IMR-90 (cell line): ENCODE measurements at regions of chr6 and their contacts with region 1.

Region 1: GRCh38 chr6:5379647-5380242 is 118.4 kb downstream of the FARS2 start:
- DNase-seq: peak; percentile 44
- ATAC-seq: peak; percentile 51
- H3K4me3 ChIP-seq: no peak overlapping the region
- H3K27ac ChIP-seq: no peak overlapping the region
- H3K4me1 ChIP-seq: no peaks in the 10 kb centered on the region; the same call in 1 of the 2 replicates
- H3K27me3 ChIP-seq: no peaks in the 10 kb centered on the region
- CTCF ChIP-seq: peak; percentile 71
- POLR2A ChIP-seq: no peak
- RAD21 ChIP-seq: peak; percentile 73

Region 2: DNA sequence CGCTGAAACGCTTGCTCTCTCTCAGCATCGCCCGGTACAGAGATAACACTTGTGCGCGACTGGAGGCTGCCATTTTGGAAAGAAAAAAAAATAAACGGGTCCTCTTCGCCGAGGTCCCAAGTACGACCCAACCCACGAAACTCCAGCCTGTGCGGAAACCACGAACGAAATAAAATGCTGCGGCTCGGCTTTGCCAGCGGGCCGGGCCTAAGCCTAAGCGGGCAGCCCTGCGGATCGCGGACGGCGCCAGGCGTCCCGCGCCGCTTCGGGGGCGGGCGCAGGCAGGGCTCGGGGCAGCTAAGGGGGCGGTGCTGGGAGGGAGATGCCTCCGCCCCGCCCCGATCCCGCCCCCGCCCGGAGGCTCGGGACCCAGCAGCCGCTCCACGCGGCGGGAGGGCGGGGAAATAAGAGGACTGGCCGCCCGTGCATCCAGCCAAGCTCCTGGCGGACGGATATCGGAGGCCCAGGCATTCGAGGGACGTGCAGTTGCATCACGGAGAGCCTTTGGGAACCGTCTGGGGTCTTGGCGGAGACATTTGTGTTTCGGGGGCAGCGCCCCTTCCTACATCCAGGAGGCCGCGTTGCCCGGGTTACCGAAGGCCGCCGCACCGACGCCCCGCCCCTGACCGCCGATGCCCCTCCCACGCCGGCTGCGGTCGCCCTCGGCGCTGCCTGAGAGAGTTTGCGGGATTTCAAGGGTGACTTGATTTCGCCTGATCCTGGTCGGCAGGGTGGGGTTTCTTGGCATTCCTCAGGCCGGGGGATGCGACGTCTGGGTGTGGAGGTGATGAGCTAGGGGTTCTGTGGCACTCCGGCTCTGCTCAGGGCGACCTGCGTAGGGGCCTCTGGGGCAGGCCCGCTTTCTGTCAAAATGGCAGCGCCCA is 118.8 kb before region 1 on chr6 and contains the starts of genes FARS2 and LYRM4:
- CTCF ChIA-PET with region 1: no interaction called
- POLR2A ChIA-PET with region 1: no interaction called
- dilution Hi-C with region 1: no loop called
- in situ Hi-C with region 1: no loop called
- intact Hi-C with region 1: loop called (anchors 5 kb)
- DNase-seq: peak; percentile 73
- ATAC-seq: peak; percentile 95
- H3K4me3 ChIP-seq: peak within 1 kb of the TSS; percentile 89
- H3K27ac ChIP-seq: peak within 1 kb of the TSS; percentile 99
- H3K4me1 ChIP-seq: no peaks in the 10 kb centered on the region
- H3K27me3 ChIP-seq: no peaks in the 10 kb centered on the region
- CTCF ChIP-seq: 0 out of 2 replicates have a peak, but pooled peaks have one; percentile 13
- POLR2A ChIP-seq: peak; percentile 45; the same call in 1 of the 2 replicates
- RAD21 ChIP-seq: no peak
- total RNA-seq, gene FARS2: 26.1 and 28.9 TPM in 2 replicates
- total RNA-seq, gene LYRM4: 11.5 and 16.1 TPM in 2 replicates

Region 3: GRCh38 chr6:5294392-5295211 is 85.1 kb before region 1 on chr6:
- CTCF ChIA-PET with region 1: no interaction called
- POLR2A ChIA-PET with region 1: no interaction called
- dilution Hi-C with region 1: no loop called
- in situ Hi-C with region 1: no loop called
- intact Hi-C with region 1: no loop called
- DNase-seq: no peak
- ATAC-seq: no peak
- H3K4me3 ChIP-seq: no peak overlapping the region
- H3K27ac ChIP-seq: no peak overlapping the region
- H3K4me1 ChIP-seq: peaks cover 2% of the 10 kb centered on the region; the same call in 1 of the 2 replicates
- H3K27me3 ChIP-seq: no peaks in the 10 kb centered on the region
- CTCF ChIP-seq: no peak
- POLR2A ChIP-seq: no peak
- RAD21 ChIP-seq: no peak